Mammary epithelial cell (primary cell): ENCODE measurements at regions of chr14 and their contacts with region 1.

Region 1: DNA sequence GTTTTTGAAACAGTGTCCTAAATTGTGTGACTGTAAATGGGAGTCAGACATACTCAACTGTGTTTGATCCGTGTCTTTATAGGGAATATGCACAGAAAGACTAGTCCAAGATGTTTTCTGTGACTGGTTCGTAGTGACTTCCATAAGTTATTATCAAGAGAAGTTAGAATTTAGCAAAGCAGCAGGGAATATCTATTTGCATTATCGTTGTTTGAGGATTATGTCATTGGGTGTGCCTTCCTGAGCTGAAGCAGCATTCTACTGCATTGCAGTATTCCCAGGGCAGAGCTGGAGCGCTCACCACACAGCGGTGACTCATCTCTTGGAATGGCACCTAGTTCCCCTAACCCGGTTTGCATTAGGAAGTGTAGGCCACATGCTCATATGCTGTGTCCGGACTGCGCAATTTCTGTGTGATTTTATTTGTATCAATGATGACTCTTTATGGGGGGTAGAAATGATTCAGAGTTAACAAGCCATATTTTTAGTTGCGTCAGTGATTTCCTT is 7.9 kb downstream of the DYNC1H1 start:
- DNase-seq: peak; percentile 99
- H3K4me3 ChIP-seq: peak overlapping the region in 1 of 3 experiments; percentile 25
- H3K27ac ChIP-seq: peak overlapping the region; percentile 88
- H3K4me1 ChIP-seq: peaks cover 39% of the 10 kb centered on the region
- H3K27me3 ChIP-seq: no peaks in the 10 kb centered on the region
- CTCF ChIP-seq: no peak

Region 2: DNA sequence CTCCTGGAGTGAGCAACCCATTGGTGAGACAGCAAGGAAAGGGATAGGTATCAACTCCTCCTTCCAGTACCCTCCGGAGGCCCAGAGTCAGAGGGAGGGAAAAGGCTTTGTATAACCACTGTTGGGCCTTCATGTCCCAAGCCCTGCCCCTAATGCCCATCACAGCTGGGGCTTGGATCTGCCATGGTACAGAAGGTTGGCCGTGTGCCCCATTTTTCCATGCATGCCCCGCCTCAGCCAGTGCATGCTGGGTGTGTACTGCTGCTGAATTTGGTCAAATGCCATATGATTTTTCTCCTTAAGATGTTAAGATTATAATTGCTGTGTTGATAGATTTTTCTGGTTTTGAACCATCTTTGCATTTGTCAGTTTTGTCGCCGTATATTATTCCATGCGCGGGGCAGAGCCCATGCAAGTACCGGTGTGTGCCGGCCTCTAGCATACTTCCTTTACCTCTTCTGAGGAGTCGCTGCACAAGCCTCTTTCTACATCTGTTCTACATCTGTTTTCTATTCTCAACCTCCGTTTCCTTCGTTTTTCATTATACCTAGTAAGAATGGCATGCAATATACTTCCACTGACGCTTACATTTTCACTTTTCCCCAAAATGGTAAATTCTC is 184.2 kb before region 1 on chr14:
- CTCF ChIA-PET with region 1: interaction called, 13 read pairs
- dilution Hi-C with region 1: no loop called
- in situ Hi-C with region 1: no loop called
- intact Hi-C with region 1: no loop called
- DNase-seq: no peak
- H3K4me3 ChIP-seq: no peak overlapping the region
- H3K27ac ChIP-seq: no peak overlapping the region
- H3K4me1 ChIP-seq: peaks cover 4% of the 10 kb centered on the region
- H3K27me3 ChIP-seq: no peaks in the 10 kb centered on the region
- CTCF ChIP-seq: no peak

Region 3: DNA sequence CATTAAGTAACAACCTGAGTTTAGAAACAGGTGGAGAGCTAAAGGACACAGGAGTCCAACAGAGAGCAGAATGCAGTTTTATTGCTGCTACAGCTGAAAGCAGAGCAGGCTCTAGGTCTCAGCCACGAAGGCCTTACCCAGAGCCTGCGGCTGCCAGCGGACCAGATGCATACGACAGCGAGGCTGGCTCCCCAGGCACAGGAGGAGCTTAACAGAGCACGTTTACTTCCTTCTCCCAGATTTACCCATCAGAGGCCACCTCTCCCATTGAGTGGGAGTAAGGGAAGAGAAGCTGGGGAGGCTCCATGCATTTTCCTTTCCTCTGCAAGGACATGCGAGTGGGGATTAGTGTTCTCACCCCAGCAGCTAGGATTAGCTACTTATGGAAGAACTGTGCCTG is 14.6 kb after region 1 on chr14:
- CTCF ChIA-PET with region 1: no interaction called
- dilution Hi-C with region 1: no loop called
- in situ Hi-C with region 1: no loop called
- intact Hi-C with region 1: no loop called
- DNase-seq: no peak
- H3K4me3 ChIP-seq: no peak overlapping the region
- H3K27ac ChIP-seq: no peak overlapping the region
- H3K4me1 ChIP-seq: no peaks in the 10 kb centered on the region
- H3K27me3 ChIP-seq: no peaks in the 10 kb centered on the region
- CTCF ChIP-seq: no peak